Activated CD4-positive, alpha-beta memory T cell treated with anti-CD3 and anti-CD28 coated beads for 36 hours (primary cell): ENCODE measurements at regions of chr1 and their contacts with region 1.

Region 1: DNA sequence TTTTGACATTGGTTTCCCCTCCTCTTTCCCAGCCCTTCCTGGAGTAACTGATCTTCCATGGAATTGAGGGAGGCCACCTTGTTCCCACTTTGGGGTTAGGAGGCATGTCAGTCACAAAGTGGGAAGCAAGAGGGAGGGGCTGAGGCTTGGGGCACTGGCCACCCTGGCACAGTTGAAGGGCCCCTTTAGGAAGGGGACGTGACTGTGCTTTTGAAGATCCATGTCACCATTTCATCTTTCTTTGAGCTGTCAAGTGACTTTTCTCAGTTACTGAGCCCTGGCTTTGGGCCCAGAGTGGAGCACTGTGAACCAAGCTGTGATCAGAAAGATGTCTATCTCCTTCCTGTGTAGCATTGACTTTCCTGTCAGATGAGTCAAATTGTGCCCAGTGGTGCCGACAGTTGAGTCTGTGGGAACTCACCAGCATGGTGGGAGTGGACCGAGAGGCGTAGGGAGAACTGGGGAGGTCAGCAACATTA is 38.5 kb upstream of the TDRD10 start:
- DNase-seq: peak; percentile 89
- H3K4me3 Mint-ChIP-seq: peak overlapping the region; percentile 1
- H3K27ac Mint-ChIP-seq: peak overlapping the region; percentile 66
- H3K4me1 Mint-ChIP-seq: peaks cover 82% of the 10 kb centered on the region
- H3K27me3 Mint-ChIP-seq: no peaks in the 10 kb centered on the region

Region 2: DNA sequence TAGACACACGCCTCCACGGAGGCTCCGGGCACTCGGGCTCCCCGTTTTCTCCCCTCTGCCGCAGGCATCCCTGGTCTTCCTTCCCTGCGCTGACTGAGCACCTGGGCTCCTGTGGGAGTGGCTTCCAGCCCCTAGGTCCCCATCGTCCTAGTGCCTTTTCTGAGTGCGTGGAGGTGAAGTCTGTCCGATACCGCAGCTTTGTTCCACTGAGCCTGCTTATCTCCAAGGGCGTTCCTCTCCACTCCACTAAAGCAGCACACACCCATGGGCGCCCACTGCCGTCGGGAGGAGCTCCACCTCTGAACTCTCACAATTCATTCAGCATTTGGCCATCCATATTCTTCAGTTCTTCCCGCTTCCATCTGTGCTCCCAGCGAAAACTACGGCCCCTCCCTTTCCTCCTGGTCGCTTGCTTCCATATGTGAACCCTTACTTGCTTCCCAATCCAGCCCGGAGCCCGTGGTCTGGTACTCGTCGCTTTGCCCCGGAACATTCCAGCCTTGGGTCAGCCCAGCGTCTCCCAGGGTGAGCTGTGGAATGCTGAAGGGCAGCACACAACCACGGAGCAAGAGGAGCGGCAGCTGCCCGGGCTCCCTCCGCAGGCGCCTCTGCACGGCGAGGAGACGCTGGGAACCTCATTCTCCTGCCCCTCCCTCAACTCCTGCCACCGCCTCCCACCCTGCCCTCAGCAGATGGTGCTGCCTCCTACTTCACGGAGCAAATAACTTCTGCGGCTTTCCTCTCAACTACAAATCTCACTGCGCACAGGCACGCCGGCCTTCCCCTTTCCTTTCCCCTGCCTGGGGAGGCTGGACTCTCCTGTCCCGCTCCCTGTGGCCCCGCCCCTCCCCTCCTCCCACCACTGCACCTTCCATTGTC is 110.7 kb before region 1 on chr1:
- CTCF ChIA-PET with region 1: interaction called, 14 read pairs
- POLR2A ChIA-PET with region 1: no interaction called
- intact Hi-C with region 1: loop called (anchors 2 kb)
- DNase-seq: peak; percentile 81
- H3K4me3 Mint-ChIP-seq: peak overlapping the region; percentile 72
- H3K27ac Mint-ChIP-seq: peak overlapping the region; percentile 82
- H3K4me1 Mint-ChIP-seq: peaks cover 41% of the 10 kb centered on the region
- H3K27me3 Mint-ChIP-seq: no peaks in the 10 kb centered on the region

Region 3: DNA sequence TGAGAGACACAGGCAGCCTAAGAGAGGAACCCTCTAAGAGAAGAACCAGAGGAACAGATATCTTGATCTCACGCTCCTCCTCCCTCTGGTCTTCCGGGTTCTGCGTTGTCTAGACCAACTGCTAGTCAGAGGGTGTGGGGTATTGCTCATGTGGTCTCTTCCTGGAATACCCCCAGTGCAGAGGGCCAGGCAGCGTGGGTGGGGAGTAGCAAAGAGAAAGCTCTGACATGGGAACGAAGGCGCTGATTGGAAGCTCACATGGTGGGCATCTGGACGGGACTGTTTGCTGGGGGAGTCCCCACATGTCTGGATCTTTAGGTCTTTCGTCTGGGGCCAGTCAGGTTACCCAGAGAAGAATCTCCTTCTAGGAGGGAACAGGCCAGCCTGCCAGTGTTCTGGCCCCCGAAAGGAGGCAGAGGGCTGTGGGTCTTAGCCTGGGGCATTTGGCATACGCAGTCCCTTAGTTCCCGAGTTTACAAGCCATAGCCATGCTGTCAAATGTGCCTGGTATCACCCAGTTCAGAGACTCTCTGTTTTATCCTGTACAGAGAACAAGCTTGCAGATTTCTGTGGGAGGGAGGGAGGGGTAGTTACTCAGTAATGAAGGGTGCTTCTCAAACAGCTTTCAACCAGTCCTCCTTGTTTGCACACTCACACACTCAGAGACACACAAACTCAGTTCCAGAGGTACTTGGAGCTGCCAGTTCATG is 76.8 kb before region 1 on chr1:
- CTCF ChIA-PET with region 1: interaction called, 3 read pairs
- POLR2A ChIA-PET with region 1: interaction called, 3 read pairs
- intact Hi-C with region 1: loop called (anchors 2 kb)
- DNase-seq: peak; percentile 92
- H3K4me3 Mint-ChIP-seq: peak overlapping the region; percentile 69
- H3K27ac Mint-ChIP-seq: peak overlapping the region; percentile 95
- H3K4me1 Mint-ChIP-seq: peaks cover 36% of the 10 kb centered on the region
- H3K27me3 Mint-ChIP-seq: no peaks in the 10 kb centered on the region

Region 4: GRCh38 chr1:154431586-154432373 is 31.8 kb before region 1 on chr1:
- CTCF ChIA-PET with region 1: interaction called, 3 read pairs
- POLR2A ChIA-PET with region 1: interaction called, 28 read pairs
- intact Hi-C with region 1: loop called (anchors 2 kb)
- DNase-seq: peak; percentile 86
- H3K4me3 Mint-ChIP-seq: no peak overlapping the region
- H3K27ac Mint-ChIP-seq: peak overlapping the region; percentile 85
- H3K4me1 Mint-ChIP-seq: peaks cover 56% of the 10 kb centered on the region
- H3K27me3 Mint-ChIP-seq: no peaks in the 10 kb centered on the region

Region 5: GRCh38 chr1:154442006-154442740 is 21.4 kb before region 1 on chr1:
- CTCF ChIA-PET with region 1: interaction called, 10 read pairs
- POLR2A ChIA-PET with region 1: interaction called, 12 read pairs
- intact Hi-C with region 1: loop called (anchors 1 kb)
- DNase-seq: no peak
- H3K4me3 Mint-ChIP-seq: no peak overlapping the region
- H3K27ac Mint-ChIP-seq: peak overlapping the region; percentile 61
- H3K4me1 Mint-ChIP-seq: peaks cover 71% of the 10 kb centered on the region
- H3K27me3 Mint-ChIP-seq: no peaks in the 10 kb centered on the region